Prostate gland (tissue), 2 donors: ENCODE measurements at regions of chr4 and their contacts with region 1.

Region 1: GRCh38 chr4:39697740-39698423 is at the start of gene UBE2K:
- DNase-seq: peak; percentile 75
- H3K4me3 ChIP-seq: peak within 1 kb of the TSS; percentile 76 to 93
- H3K27ac ChIP-seq: peak within 1 kb of the TSS; percentile 95
- H3K4me1 ChIP-seq: no peaks in the 10 kb centered on the region
- H3K27me3 ChIP-seq: no peaks in the 10 kb centered on the region
- CTCF ChIP-seq: peak in 2 of 4 experiments; percentile 16 to 25
- POLR2A ChIP-seq: peak; percentile 79
- total RNA-seq, gene UBE2K: 25.6 to 30.3 TPM

Region 2: GRCh38 chr4:39527273-39528060 is 170.4 kb before region 1 on chr4 and contains the start of gene UGDH:
- intact Hi-C with region 1: loop called (anchors 5 kb)
- DNase-seq: peak; percentile 98
- H3K4me3 ChIP-seq: peak within 1 kb of the TSS; percentile 66 to 89
- H3K27ac ChIP-seq: peak within 1 kb of the TSS; percentile 95 to 97
- H3K4me1 ChIP-seq: peaks cover 5% of the 10 kb centered on the region
- H3K27me3 ChIP-seq: no peaks in the 10 kb centered on the region
- CTCF ChIP-seq: peak in 2 of 4 experiments; percentile 4 to 30
- POLR2A ChIP-seq: peak; percentile 97
- total RNA-seq, gene UGDH: 59.0 to 147 TPM

Region 3: GRCh38 chr4:39732728-39733127 is 34.8 kb after region 1 on chr4:
- intact Hi-C with region 1: no loop called
- DNase-seq: no peak
- H3K4me3 ChIP-seq: no peak overlapping the region
- H3K27ac ChIP-seq: no peak overlapping the region
- H3K4me1 ChIP-seq: no peaks in the 10 kb centered on the region
- H3K27me3 ChIP-seq: no peaks in the 10 kb centered on the region
- CTCF ChIP-seq: no peak
- POLR2A ChIP-seq: no peak

Region 4: GRCh38 chr4:39771006-39771724 is 73.3 kb after region 1 on chr4:
- intact Hi-C with region 1: no loop called
- DNase-seq: no peak
- H3K4me3 ChIP-seq: no peak overlapping the region
- H3K27ac ChIP-seq: no peak overlapping the region
- H3K4me1 ChIP-seq: no peaks in the 10 kb centered on the region
- H3K27me3 ChIP-seq: no peaks in the 10 kb centered on the region
- CTCF ChIP-seq: no peak
- POLR2A ChIP-seq: no peak

Region 5: DNA sequence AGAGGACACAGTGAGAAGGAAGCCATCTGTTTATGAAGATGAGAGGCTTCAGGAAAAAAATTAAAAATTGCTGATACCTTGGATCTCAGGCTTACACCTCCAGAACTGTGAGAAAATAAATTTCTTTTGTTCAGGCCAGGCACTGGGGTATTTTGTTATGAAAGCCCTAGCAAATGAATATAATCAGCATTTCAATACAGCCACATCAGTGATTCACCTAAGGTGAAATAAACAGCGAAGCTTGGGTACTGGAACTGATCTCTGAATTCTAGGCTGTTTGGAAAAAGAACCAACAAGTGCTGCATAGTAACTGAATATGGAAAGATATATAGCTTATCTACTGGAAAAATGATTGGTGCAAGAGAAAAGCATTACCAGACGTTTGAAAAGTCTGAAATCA is 191.3 kb after region 1 on chr4:
- intact Hi-C with region 1: no loop called
- DNase-seq: no peak
- H3K4me3 ChIP-seq: no peak overlapping the region
- H3K27ac ChIP-seq: no peak overlapping the region
- H3K4me1 ChIP-seq: no peaks in the 10 kb centered on the region
- H3K27me3 ChIP-seq: no peaks in the 10 kb centered on the region
- CTCF ChIP-seq: no peak
- POLR2A ChIP-seq: no peak